ENCODE measurements at regions of chr20 and their contacts with region 1.

Region 1: DNA sequence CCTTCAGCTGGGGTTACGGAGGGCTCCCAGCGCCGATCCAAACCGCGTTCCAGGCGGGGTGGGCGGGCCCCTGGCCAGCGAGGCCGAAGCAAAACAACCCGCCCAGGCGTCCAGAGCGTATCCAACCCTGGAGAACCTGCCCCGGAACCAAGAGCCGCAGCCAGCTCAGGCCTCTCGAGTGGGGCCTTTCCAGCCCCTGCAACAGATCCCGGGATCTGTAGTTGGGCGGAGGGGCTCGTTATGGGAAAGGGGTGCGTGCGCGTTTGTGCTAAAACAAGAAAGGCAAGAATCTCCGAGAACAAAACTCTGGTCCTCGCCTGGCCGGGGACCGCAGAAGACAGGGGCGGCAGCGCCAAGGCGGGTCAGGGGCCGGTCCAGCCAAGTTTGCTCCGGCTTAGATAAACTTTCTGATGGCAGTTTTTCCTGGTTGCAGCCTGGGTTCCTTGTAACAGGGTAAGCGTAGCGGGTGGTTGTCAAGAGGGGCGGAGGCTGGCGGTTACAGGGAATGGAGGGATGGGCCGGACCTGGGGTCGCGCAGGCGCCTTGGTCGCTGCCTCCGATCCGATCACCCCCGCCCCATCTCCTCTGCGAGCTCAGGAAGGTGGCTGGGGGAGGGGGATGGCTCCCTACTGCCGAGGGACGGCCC is 448 bp upstream of the RIN2 start:
- DNase-seq: peak; percentile 96
- ATAC-seq: peak; percentile 77
- H3K4me3 ChIP-seq: peak overlapping the region; percentile 89
- H3K27ac ChIP-seq: peak overlapping the region; percentile 87
- H3K4me1 ChIP-seq: peaks cover 32% of the 10 kb centered on the region
- H3K27me3 ChIP-seq: no peaks in the 10 kb centered on the region
- CTCF ChIP-seq: no peak

Region 2: GRCh38 chr20:19692685-19693119 is 64.9 kb before region 1 on chr20:
- CTCF ChIA-PET with region 1: no interaction called
- POLR2A ChIA-PET with region 1: interaction called, 4 read pairs
- intact Hi-C with region 1: loop called (anchors 1 kb)
- DNase-seq: peak; percentile 82
- ATAC-seq: peak; percentile 53
- H3K4me3 ChIP-seq: peak overlapping the region; percentile 37
- H3K27ac ChIP-seq: peak overlapping the region; percentile 86
- H3K4me1 ChIP-seq: peaks cover 46% of the 10 kb centered on the region
- H3K27me3 ChIP-seq: no peaks in the 10 kb centered on the region
- CTCF ChIP-seq: peak; percentile 98

Region 3: GRCh38 chr20:19735446-19735845 is 22.2 kb before region 1 on chr20:
- CTCF ChIA-PET with region 1: interaction called, 11 read pairs
- POLR2A ChIA-PET with region 1: interaction called, 19 read pairs
- intact Hi-C with region 1: loop called (anchors 2 kb)
- DNase-seq: peak; percentile 97
- ATAC-seq: peak; percentile 90
- H3K4me3 ChIP-seq: 0 out of 2 replicates have a peak overlapping the region, but pooled peaks have one; percentile 3
- H3K27ac ChIP-seq: peak overlapping the region; percentile 96
- H3K4me1 ChIP-seq: peaks cover 48% of the 10 kb centered on the region
- H3K27me3 ChIP-seq: no peaks in the 10 kb centered on the region
- CTCF ChIP-seq: no peak

Region 4: GRCh38 chr20:19775360-19776253 is 18.0 kb after region 1 on chr20:
- CTCF ChIA-PET with region 1: interaction called, 7 read pairs
- POLR2A ChIA-PET with region 1: interaction called, 13 read pairs
- intact Hi-C with region 1: loop called (anchors 1 kb)
- DNase-seq: peak; percentile 93
- ATAC-seq: peak; percentile 98
- H3K4me3 ChIP-seq: no peak overlapping the region
- H3K27ac ChIP-seq: peak overlapping the region; percentile 51
- H3K4me1 ChIP-seq: peaks cover 44% of the 10 kb centered on the region
- H3K27me3 ChIP-seq: no peaks in the 10 kb centered on the region
- CTCF ChIP-seq: no peak

Region 5: GRCh38 chr20:19802492-19803158 is 45.0 kb after region 1 on chr20:
- CTCF ChIA-PET with region 1: no interaction called
- POLR2A ChIA-PET with region 1: no interaction called
- intact Hi-C with region 1: loop called (anchors 1 kb)
- DNase-seq: peak; percentile 87
- ATAC-seq: peak; percentile 88
- H3K4me3 ChIP-seq: no peak overlapping the region
- H3K27ac ChIP-seq: peak overlapping the region; percentile 52
- H3K4me1 ChIP-seq: peaks cover 28% of the 10 kb centered on the region
- H3K27me3 ChIP-seq: no peaks in the 10 kb centered on the region
- CTCF ChIP-seq: peak; percentile 84

Region 6: GRCh38 chr20:19964289-19965263 is 207.0 kb after region 1 on chr20:
- CTCF ChIA-PET with region 1: no interaction called
- POLR2A ChIA-PET with region 1: interaction called, 22 read pairs
- intact Hi-C with region 1: no loop called
- DNase-seq: peak; percentile 83
- ATAC-seq: peak; percentile 98
- H3K4me3 ChIP-seq: no peak overlapping the region
- H3K27ac ChIP-seq: peak overlapping the region; percentile 51
- H3K4me1 ChIP-seq: peaks cover 13% of the 10 kb centered on the region
- H3K27me3 ChIP-seq: no peaks in the 10 kb centered on the region
- CTCF ChIP-seq: no peak

Region 7: DNA sequence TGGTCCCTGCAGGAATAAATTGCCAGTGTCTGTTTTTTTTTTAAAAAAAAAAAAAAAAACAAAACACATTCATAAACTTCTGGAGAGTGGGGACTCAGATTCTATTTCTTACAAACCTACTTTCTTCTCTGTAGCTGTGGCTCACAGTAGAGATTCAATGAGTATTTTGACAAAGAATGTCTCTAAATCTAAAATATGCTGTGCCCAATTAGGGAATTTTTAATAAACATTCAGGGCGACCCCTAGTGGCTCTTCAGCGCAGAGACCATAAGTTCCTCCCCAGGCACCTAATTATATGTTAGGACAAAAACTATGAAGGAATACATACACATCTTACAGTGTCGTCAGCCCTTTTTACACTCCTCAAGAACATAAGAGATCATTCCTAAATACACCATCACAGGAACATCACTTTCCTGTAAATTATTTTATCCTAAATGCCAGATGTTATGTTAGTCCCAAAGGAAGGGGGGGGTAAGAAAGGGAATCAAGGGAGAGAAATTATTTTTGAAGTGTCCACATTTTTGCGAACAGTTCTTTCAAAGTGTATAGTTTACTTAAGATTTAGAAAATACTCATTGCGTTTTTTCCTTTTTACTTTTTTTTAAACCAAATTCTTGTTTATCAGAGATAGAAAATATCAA is 237.7 kb after region 1 on chr20:
- CTCF ChIA-PET with region 1: no interaction called
- POLR2A ChIA-PET with region 1: interaction called, 15 read pairs
- intact Hi-C with region 1: no loop called
- DNase-seq: peak; percentile 77
- ATAC-seq: no peak
- H3K4me3 ChIP-seq: no peak overlapping the region
- H3K27ac ChIP-seq: peak overlapping the region; percentile 96
- H3K4me1 ChIP-seq: peaks cover 53% of the 10 kb centered on the region
- H3K27me3 ChIP-seq: no peaks in the 10 kb centered on the region
- CTCF ChIP-seq: peak; percentile 97